ENCODE measurements at regions of chr6 and their contacts with region 1.

Region 1: GRCh38 chr6:30130887-30131862 is 4.8 kb upstream of the TRIM40 start:
- DNase-seq: peak; percentile 85
- ATAC-seq: peak; percentile 96
- H3K4me3 ChIP-seq: no peak overlapping the region
- H3K27ac ChIP-seq: no peak overlapping the region
- H3K4me1 ChIP-seq: no peaks in the 10 kb centered on the region
- H3K27me3 ChIP-seq: peaks cover 48% of the 10 kb centered on the region
- CTCF ChIP-seq: peak; percentile 99
- POLR2A ChIP-seq: no peak
- RAD21 ChIP-seq: peak; percentile 81

Region 2: GRCh38 chr6:29705389-29706231 is 425.6 kb before region 1 on chr6:
- CTCF ChIA-PET with region 1: no interaction called
- POLR2A ChIA-PET with region 1: no interaction called
- dilution Hi-C with region 1: no loop called
- in situ Hi-C with region 1: no loop called
- intact Hi-C with region 1: loop called (anchors 1 kb)
- DNase-seq: peak; percentile 53
- ATAC-seq: peak; percentile 97
- H3K4me3 ChIP-seq: no peak overlapping the region
- H3K27ac ChIP-seq: no peak overlapping the region
- H3K4me1 ChIP-seq: no peaks in the 10 kb centered on the region
- H3K27me3 ChIP-seq: peaks cover 13% of the 10 kb centered on the region
- CTCF ChIP-seq: peak; percentile 70
- POLR2A ChIP-seq: no peak
- RAD21 ChIP-seq: peak; percentile 74

Region 3: GRCh38 chr6:29752451-29753308 is 378.5 kb before region 1 on chr6:
- CTCF ChIA-PET with region 1: no interaction called
- POLR2A ChIA-PET with region 1: no interaction called
- dilution Hi-C with region 1: no loop called
- in situ Hi-C with region 1: no loop called
- intact Hi-C with region 1: no loop called
- DNase-seq: peak; percentile 84
- ATAC-seq: peak; percentile 80
- H3K4me3 ChIP-seq: peak overlapping the region; percentile 50
- H3K27ac ChIP-seq: peak overlapping the region; percentile 66
- H3K4me1 ChIP-seq: peaks cover 2% of the 10 kb centered on the region; the same call in 1 of the 2 replicates
- H3K27me3 ChIP-seq: peaks cover 19% of the 10 kb centered on the region
- CTCF ChIP-seq: peak; percentile 99
- POLR2A ChIP-seq: peak; percentile 26; the same call in 1 of the 2 replicates
- RAD21 ChIP-seq: peak; percentile 68

Region 4: GRCh38 chr6:30066577-30067459 is 64.4 kb before region 1 on chr6 and contains the start of gene PPP1R11:
- CTCF ChIA-PET with region 1: interaction called, 5 read pairs
- POLR2A ChIA-PET with region 1: no interaction called
- dilution Hi-C with region 1: no loop called
- in situ Hi-C with region 1: no loop called
- intact Hi-C with region 1: loop called (anchors 2 kb)
- DNase-seq: peak; percentile 99
- ATAC-seq: peak; percentile 99
- H3K4me3 ChIP-seq: peak within 1 kb of the TSS; percentile 74
- H3K27ac ChIP-seq: peak within 1 kb of the TSS; percentile 81
- H3K4me1 ChIP-seq: peaks cover 3% of the 10 kb centered on the region
- H3K27me3 ChIP-seq: peaks cover 10% of the 10 kb centered on the region; the same call in 1 of the 2 replicates
- CTCF ChIP-seq: no peak
- POLR2A ChIP-seq: peak; percentile 88
- RAD21 ChIP-seq: no peak
- total RNA-seq, gene PPP1R11: 15.6 and 16.7 TPM in 2 replicates

Region 5: GRCh38 chr6:30102970-30103874 is 28.0 kb before region 1 on chr6:
- CTCF ChIA-PET with region 1: interaction called, 54 read pairs
- POLR2A ChIA-PET with region 1: no interaction called
- dilution Hi-C with region 1: no loop called
- in situ Hi-C with region 1: no loop called
- intact Hi-C with region 1: loop called (anchors 1 kb)
- DNase-seq: peak; percentile 80
- ATAC-seq: peak; percentile 77
- H3K4me3 ChIP-seq: peak overlapping the region; percentile 30
- H3K27ac ChIP-seq: no peak overlapping the region
- H3K4me1 ChIP-seq: peaks cover 6% of the 10 kb centered on the region
- H3K27me3 ChIP-seq: peaks cover 51% of the 10 kb centered on the region
- CTCF ChIP-seq: peak; percentile 94
- POLR2A ChIP-seq: peak; percentile 42; the same call in 1 of the 2 replicates
- RAD21 ChIP-seq: peak; percentile 85

Region 6: DNA sequence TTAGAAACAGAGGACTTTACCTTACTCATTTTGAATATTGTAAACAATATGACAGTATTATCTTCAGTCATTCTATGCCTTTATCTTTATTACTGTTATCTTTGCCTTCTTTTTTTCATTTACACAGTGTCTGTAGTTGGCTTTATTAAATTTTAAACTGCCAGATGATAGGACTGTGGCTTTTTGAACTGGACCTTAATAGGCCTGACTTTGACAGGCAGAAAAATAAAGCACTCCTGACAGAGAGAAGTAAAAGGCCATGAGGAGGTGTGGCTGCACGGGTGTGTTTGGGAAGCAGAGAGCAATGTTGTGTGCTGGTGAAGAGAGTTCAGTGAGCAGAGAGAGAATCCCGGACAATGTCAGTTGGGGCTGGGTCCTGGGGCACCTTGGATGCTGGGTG is 12.6 kb after region 1 on chr6:
- CTCF ChIA-PET with region 1: interaction called, 26 read pairs
- POLR2A ChIA-PET with region 1: no interaction called
- dilution Hi-C with region 1: no loop called
- in situ Hi-C with region 1: no loop called
- intact Hi-C with region 1: no loop called
- DNase-seq: no peak
- ATAC-seq: no peak
- H3K4me3 ChIP-seq: no peak overlapping the region
- H3K27ac ChIP-seq: no peak overlapping the region
- H3K4me1 ChIP-seq: no peaks in the 10 kb centered on the region
- H3K27me3 ChIP-seq: peaks cover 32% of the 10 kb centered on the region
- CTCF ChIP-seq: no peak
- POLR2A ChIP-seq: no peak
- RAD21 ChIP-seq: no peak

Region 7: DNA sequence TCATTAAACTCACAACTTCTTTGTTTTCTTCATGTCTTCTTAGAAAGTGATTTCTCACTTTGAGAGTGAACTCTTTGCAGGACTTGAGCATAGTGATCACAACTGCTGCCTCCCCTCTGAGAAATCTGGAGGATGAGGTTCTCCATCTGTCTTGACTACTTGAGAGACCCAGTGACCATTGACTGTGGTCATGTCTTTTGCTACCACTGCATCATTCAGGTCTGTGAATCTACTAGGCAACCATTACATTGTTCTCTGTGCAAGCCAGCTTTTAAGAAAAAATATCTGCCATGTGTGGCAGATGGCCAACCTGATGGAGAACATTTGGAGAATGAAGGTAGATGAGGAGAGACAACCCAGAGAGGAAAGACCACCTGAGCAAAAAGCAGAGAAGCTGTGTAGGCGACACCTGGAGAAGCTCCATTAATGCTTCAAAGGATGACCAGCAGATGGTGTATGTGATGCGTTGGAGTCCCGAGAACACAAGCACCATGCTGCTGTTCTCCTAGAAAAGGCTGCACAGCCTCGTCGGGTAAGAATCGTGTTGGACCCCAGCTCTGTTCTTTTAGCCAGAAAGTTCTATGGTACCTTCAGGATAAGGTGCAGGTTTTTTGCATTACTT is 107.1 kb after region 1 on chr6:
- CTCF ChIA-PET with region 1: no interaction called
- POLR2A ChIA-PET with region 1: no interaction called
- dilution Hi-C with region 1: no loop called
- in situ Hi-C with region 1: no loop called
- intact Hi-C with region 1: no loop called
- DNase-seq: peak; percentile 31
- ATAC-seq: peak; percentile 71; the same call in 1 of the 2 replicates
- H3K4me3 ChIP-seq: no peak overlapping the region
- H3K27ac ChIP-seq: no peak overlapping the region
- H3K4me1 ChIP-seq: no peaks in the 10 kb centered on the region
- H3K27me3 ChIP-seq: peaks cover 6% of the 10 kb centered on the region; the same call in 1 of the 2 replicates
- CTCF ChIP-seq: peak; percentile 40
- POLR2A ChIP-seq: no peak
- RAD21 ChIP-seq: peak; percentile 47

Region 8: DNA sequence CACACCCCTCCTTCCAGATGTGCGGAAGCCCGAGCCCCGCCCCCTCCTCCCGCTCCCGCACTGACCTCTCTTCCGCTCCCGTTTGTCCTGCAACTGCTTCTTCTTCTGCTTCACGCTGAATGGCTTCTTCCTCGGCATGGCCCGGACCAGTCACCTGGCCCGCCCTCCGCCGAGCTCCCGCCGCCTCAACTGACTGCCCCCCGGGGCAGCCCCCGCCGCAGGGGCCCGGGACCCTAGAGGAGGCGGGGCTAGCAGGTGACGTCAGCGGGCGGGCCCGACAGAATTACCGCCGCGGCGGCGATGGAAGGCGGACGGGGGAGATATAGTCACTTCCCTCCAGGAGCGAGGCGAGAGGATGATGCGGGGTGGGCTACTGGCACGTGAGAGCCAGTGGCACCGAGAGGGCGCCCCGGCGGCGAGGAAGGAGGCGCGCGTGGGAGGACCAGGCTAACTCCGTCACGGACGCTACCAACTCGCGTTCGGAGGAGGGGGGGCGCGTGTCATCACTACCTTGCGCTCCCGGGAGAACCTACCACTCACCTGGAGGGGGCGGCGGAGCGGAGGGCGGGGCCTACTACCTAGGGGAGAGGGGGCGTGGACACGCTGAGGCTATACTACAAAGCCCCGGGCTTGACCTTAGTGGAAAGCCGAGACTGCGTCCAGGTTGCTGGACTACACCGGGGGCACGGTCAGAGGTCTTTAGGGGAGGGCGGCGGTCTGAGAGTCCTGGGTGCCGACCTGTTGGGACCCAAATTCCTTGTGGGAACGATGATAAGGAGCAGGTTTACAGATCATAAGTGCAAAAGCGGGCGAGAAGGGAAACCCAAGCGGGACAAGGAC is 425.1 kb after region 1 on chr6 and contains the start of gene GNL1:
- CTCF ChIA-PET with region 1: no interaction called
- POLR2A ChIA-PET with region 1: no interaction called
- dilution Hi-C with region 1: no loop called
- in situ Hi-C with region 1: no loop called
- intact Hi-C with region 1: no loop called
- DNase-seq: peak; percentile 85
- ATAC-seq: peak; percentile 72
- H3K4me3 ChIP-seq: peak within 1 kb of the TSS; percentile 94
- H3K27ac ChIP-seq: peak within 1 kb of the TSS; percentile 96
- H3K4me1 ChIP-seq: peaks cover 2% of the 10 kb centered on the region
- H3K27me3 ChIP-seq: no peaks in the 10 kb centered on the region
- CTCF ChIP-seq: no peak
- POLR2A ChIP-seq: peak; percentile 83
- RAD21 ChIP-seq: no peak
- total RNA-seq, gene GNL1: 33.9 and 40.5 TPM in 2 replicates

Measured in IMR-90 (cell line).